ENCODE measurements at regions of chr11 and their contacts with region 1.

Region 1: GRCh38 chr11:117345039-117345438 is 17.4 kb downstream of the CEP164 start:
- DNase-seq: no peak
- H3K4me3 Mint-ChIP-seq: no peak overlapping the region
- H3K27ac Mint-ChIP-seq: no peak overlapping the region
- H3K4me1 Mint-ChIP-seq: no peaks in the 10 kb centered on the region
- H3K27me3 Mint-ChIP-seq: no peaks in the 10 kb centered on the region
- CTCF ChIP-seq: no peak

Region 2: DNA sequence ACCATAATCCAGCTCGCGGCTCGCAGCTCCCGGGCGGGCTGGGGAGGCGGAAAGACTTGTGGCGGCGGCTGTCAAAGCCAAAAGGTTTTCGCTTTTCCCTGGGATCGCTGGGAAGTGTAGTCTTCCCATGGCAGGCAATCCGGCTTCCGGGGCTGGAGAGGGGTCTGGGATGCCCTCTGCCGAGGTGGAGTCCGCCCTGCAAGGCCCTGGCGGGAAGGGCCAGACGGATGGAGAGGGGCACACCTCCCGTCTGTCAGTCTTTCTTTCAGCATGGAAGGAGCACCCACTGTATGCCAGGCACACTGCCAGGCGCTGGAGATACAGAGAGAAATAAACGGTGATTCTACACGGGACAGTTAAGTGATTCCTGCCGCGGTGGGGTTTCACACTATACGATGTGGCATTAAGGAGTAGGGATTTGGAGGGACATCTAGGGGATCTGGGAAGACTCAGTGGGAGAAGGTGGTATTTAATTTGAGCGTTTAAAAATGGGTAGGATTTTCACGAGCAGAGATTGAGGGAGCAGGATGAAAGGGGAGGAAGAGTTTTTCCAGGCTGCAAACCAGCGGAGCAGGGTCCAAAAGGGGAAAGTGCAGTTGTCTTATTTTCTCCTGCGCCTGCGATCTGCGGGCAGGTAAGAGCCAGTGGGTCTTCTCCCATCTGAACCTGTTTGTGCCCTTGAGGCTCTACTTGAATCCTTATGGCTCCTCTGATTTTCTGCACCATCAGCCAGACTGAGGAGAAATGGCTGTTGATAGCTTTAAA is 28.7 kb before region 1 on chr11 and contains the start of gene BACE1:
- CTCF ChIA-PET with region 1: no interaction called
- intact Hi-C with region 1: no loop called
- DNase-seq: peak; percentile 73
- H3K4me3 Mint-ChIP-seq: peak within 1 kb of the TSS; percentile 67
- H3K27ac Mint-ChIP-seq: no peak within 1 kb of the TSS
- H3K4me1 Mint-ChIP-seq: peaks cover 8% of the 10 kb centered on the region
- H3K27me3 Mint-ChIP-seq: no peaks in the 10 kb centered on the region
- CTCF ChIP-seq: no peak
- total RNA-seq, gene BACE1: 9.6 and 10.7 TPM in 2 replicates

Region 3: DNA sequence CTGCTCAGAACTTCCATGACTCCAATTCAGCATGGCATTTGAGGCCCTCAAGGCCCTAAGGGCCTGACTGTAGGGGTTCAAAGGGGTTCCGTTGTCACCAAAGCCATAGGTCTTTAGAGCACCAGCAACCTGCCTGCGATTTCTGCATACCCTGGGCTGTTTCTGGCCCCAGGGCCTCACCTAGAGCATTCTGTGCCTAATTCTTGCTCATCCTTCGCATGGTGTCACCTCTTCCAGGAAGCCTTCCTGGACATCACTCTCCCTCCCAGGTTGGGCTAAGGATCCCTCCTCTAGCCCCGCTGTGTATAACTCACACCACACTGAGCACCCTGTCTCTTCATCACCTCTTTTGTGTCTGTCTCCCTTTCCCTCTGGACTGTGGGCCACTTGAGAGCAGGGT is 176.9 kb after region 1 on chr11:
- CTCF ChIA-PET with region 1: interaction called, 12 read pairs
- intact Hi-C with region 1: no loop called
- DNase-seq: no peak
- H3K4me3 Mint-ChIP-seq: no peak overlapping the region
- H3K27ac Mint-ChIP-seq: no peak overlapping the region
- H3K4me1 Mint-ChIP-seq: no peaks in the 10 kb centered on the region
- H3K27me3 Mint-ChIP-seq: peaks cover 32% of the 10 kb centered on the region
- CTCF ChIP-seq: no peak

Region 4: GRCh38 chr11:117678658-117679406 is 333.8 kb after region 1 on chr11:
- CTCF ChIA-PET with region 1: no interaction called
- intact Hi-C with region 1: no loop called
- DNase-seq: no peak
- H3K4me3 Mint-ChIP-seq: no peak overlapping the region
- H3K27ac Mint-ChIP-seq: no peak overlapping the region
- H3K4me1 Mint-ChIP-seq: no peaks in the 10 kb centered on the region
- H3K27me3 Mint-ChIP-seq: peaks cover 91% of the 10 kb centered on the region
- CTCF ChIP-seq: no peak